Right ventricle myocardium inferior (tissue), 1 donor: ENCODE measurements at regions of chr3 and their contacts with region 1.

Region 1: GRCh38 chr3:17055374-17056276 is 170.9 kb downstream of the PLCL2 start:
- DNase-seq: no peak
- ATAC-seq: peak; percentile 46

Region 2: DNA sequence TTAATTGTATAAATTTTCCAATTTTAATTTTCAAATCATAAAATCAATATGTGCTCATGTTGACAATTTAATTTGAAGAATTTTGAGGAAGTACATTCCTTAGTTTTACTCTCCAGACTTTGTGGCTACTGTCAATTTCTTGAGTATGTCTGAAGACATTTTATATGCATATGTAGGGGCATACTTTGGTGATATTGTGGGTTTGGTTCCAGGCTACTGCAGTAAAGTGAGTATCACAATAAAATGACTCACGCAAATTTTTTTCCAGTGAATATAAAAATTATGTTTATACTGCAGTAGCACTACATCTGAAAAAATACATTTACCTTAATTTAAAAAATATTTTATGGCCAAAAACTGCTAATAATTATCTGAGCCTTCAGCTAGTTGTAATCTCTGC is 294.1 kb before region 1 on chr3:
- intact Hi-C with region 1: no loop called
- DNase-seq: no peak
- ATAC-seq: no peak

Region 3: GRCh38 chr3:16993227-16993626 is 62.4 kb before region 1 on chr3:
- intact Hi-C with region 1: no loop called
- DNase-seq: no peak
- ATAC-seq: no peak

Region 4: DNA sequence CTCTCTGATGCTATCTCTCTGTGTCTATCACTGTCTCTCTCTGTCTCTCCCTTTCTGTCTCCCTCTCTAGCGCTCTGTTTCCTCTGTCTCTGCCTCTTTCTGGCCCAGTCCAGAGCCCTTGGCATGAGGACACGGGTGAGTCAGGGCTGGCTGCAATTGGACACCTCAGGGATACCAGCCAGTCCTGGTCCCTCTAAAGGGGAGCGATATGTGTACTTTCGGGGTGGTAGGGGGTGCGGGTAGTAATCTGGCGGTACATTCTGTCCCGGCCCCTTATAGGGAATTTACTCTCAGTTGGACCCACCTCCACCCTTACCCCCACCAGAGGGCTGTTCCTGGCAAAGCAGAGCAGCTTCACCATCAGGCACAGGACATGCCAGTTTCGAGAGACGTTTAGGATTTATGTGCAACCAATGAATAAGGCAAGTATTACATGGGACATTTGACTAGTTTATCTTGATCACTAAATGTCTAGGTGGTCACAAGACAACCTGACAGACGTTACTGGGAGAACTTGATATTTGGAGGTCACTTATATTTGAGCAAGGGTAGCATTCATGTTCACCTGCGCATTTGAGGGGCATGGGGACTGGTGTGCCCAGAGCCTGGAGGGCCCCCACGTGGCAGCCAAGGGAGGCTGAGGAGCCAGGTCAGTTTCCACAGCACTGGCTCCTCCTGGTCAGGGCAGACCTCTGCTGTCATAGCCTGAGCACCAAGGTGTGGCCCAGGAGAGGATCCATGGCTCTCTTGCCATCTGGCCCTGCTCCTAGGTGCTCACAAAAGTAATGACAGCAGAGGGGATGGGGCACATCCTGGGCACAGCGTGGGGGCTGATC is 85.3 kb after region 1 on chr3:
- intact Hi-C with region 1: loop called (anchors 5 kb)
- DNase-seq: peak; percentile 71
- ATAC-seq: peak; percentile 72

Region 5: GRCh38 chr3:17175187-17175804 is 119.7 kb after region 1 on chr3:
- intact Hi-C with region 1: no loop called
- DNase-seq: no peak
- ATAC-seq: peak; percentile 45

Region 6: DNA sequence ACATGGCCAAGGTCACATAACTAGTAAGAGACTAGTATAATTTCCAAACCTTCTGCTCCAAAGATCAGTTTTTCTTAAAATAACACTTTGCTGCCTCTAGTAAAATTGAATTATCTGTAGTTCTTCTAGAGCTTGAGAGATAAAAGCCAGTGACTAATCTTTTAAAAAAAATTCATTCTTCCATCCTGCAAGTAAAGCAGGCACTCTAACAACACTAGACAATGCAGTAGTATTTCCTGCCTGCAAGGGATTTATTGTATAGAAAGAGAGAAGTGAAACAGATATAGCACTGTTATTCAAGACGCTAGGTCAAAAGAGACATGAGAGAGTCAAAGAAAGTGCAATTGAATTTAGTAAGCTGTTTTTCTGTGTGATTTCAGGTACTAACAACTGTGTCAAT is 846.3 kb after region 1 on chr3:
- intact Hi-C with region 1: no loop called
- DNase-seq: no peak
- ATAC-seq: no peak